Activated CD8-positive, alpha-beta T cell treated with anti-CD3 and anti-CD28 coated beads for 36 hours (primary cell): ENCODE measurements at regions of chr10 and their contacts with region 1.

Region 1: GRCh38 chr10:101569838-101570766 is 18.0 kb downstream of the POLL start:
- DNase-seq: peak; percentile 84
- ATAC-seq: peak; percentile 84
- H3K4me3 Mint-ChIP-seq: peak overlapping the region; percentile 72
- H3K27ac Mint-ChIP-seq: no peak overlapping the region
- H3K4me1 Mint-ChIP-seq: peaks cover 16% of the 10 kb centered on the region
- H3K27me3 Mint-ChIP-seq: peaks cover 39% of the 10 kb centered on the region
- CTCF ChIP-seq: peak; percentile 88

Region 2: GRCh38 chr10:101291331-101292193 is 278.5 kb before region 1 on chr10:
- CTCF ChIA-PET with region 1: interaction called, 4 read pairs
- POLR2A ChIA-PET with region 1: no interaction called
- intact Hi-C with region 1: loop called (anchors 5 kb)
- DNase-seq: peak; percentile 75
- ATAC-seq: peak; percentile 84
- H3K4me3 Mint-ChIP-seq: peak overlapping the region; percentile 70
- H3K27ac Mint-ChIP-seq: no peak overlapping the region
- H3K4me1 Mint-ChIP-seq: peaks cover 8% of the 10 kb centered on the region
- H3K27me3 Mint-ChIP-seq: peaks cover 65% of the 10 kb centered on the region
- CTCF ChIP-seq: peak; percentile 88

Region 3: DNA sequence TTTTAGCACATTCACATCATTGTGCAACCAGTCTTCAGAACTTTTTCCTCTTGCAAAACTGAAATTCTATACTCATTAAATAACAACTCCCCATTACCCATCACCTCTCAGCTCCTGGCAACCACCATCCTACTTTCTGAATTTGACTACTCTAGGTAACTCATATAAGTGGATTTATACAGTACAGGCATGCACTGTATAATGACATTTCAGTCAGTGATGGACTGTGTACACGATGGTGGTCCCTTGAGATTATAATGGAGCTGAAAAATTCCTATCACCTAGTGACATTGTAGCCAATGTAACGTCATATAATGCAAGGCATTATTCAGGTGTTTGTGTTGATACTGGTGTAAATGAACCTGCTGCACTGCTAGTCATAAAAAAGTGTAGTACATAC is 156.1 kb before region 1 on chr10:
- CTCF ChIA-PET with region 1: no interaction called
- POLR2A ChIA-PET with region 1: no interaction called
- intact Hi-C with region 1: no loop called
- DNase-seq: no peak
- ATAC-seq: no peak
- H3K4me3 Mint-ChIP-seq: no peak overlapping the region
- H3K27ac Mint-ChIP-seq: no peak overlapping the region
- H3K4me1 Mint-ChIP-seq: peaks cover 9% of the 10 kb centered on the region
- H3K27me3 Mint-ChIP-seq: no peaks in the 10 kb centered on the region
- CTCF ChIP-seq: no peak

Region 4: DNA sequence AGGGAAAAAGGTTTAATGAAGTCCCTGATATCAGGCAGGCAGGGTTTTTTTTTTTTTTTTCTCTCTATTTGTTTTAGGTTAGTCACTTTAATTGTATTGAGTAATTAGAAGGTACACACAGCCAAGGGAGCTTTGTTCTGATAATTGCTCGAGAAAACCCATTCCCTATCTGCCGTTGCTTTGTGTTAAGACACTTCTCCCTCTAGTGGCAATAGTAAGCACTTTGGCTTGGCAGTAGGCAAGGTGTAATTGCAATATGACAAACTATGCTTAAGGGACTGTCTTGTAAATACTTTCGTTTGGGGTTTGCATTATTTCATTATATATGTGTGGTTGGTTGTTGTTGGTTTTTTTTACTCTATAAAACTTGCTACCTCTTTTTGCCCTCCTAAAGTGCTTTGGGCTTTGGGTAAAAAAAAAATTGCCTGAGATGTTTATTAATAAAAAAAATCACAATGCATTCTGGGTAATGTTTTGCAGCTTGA is 102.8 kb before region 1 on chr10:
- CTCF ChIA-PET with region 1: interaction called, 12 read pairs
- POLR2A ChIA-PET with region 1: no interaction called
- intact Hi-C with region 1: no loop called
- DNase-seq: peak; percentile 29
- ATAC-seq: peak; percentile 88
- H3K4me3 Mint-ChIP-seq: no peak overlapping the region
- H3K27ac Mint-ChIP-seq: no peak overlapping the region
- H3K4me1 Mint-ChIP-seq: peaks cover 8% of the 10 kb centered on the region
- H3K27me3 Mint-ChIP-seq: no peaks in the 10 kb centered on the region
- CTCF ChIP-seq: peak; percentile 75

Region 5: DNA sequence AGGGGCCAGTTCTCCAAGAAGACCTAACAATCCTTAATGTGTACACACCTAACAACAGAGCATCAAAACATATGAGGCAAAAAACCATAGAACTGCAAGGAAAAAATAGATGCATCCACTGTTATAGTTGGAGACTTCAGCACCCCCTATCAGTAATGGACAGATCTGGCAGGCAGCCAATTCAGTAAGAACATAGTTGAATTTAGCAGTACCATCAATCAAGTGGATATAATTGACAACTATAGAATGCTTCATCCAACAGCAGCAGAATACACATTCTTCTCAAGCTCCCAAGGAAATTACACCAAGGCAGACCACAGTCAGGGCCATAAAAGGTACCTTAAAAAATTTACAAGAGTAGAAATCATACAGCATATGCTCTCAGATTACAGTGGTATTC is 24.2 kb before region 1 on chr10:
- CTCF ChIA-PET with region 1: interaction called, 12 read pairs
- POLR2A ChIA-PET with region 1: no interaction called
- intact Hi-C with region 1: no loop called
- DNase-seq: no peak
- ATAC-seq: no peak
- H3K4me3 Mint-ChIP-seq: no peak overlapping the region
- H3K27ac Mint-ChIP-seq: no peak overlapping the region
- H3K4me1 Mint-ChIP-seq: no peaks in the 10 kb centered on the region
- H3K27me3 Mint-ChIP-seq: no peaks in the 10 kb centered on the region
- CTCF ChIP-seq: no peak

Region 6: GRCh38 chr10:101580486-101581399 is 10.6 kb after region 1 on chr10:
- CTCF ChIA-PET with region 1: interaction called, 34 read pairs
- POLR2A ChIA-PET with region 1: interaction called, 4 read pairs
- intact Hi-C with region 1: no loop called
- DNase-seq: no peak
- ATAC-seq: no peak
- H3K4me3 Mint-ChIP-seq: no peak overlapping the region
- H3K27ac Mint-ChIP-seq: no peak overlapping the region
- H3K4me1 Mint-ChIP-seq: no peaks in the 10 kb centered on the region
- H3K27me3 Mint-ChIP-seq: no peaks in the 10 kb centered on the region
- CTCF ChIP-seq: no peak

Region 7: GRCh38 chr10:101682172-101682825 is 112.2 kb after region 1 on chr10:
- CTCF ChIA-PET with region 1: no interaction called
- POLR2A ChIA-PET with region 1: no interaction called
- intact Hi-C with region 1: no loop called
- DNase-seq: no peak
- ATAC-seq: no peak
- H3K4me3 Mint-ChIP-seq: no peak overlapping the region
- H3K27ac Mint-ChIP-seq: peak overlapping the region; percentile 30
- H3K4me1 Mint-ChIP-seq: peaks cover 40% of the 10 kb centered on the region
- H3K27me3 Mint-ChIP-seq: no peaks in the 10 kb centered on the region
- CTCF ChIP-seq: no peak

Region 8: DNA sequence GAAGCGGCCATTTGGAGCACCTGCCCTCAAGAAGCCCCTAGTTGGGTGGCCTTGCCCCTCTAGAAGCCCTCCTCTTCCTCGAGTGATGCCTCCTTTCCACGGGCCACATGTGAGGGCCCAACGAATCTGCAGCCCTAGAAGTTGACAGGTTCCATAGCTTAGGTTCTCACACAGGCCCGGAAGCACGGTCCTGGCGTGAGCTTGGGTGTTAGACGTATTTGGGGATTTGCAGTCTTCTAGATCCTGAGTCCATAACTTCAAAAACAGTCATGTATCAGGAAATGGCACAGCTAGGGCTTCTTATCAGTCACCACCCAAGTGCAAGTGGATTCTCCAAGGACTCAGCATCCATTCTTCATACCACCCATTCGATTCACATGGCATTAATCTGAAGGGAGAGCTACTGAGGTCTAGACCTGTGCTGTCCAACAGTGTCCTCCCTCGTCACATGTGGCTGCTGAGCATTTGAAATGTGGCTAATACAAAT is 125.3 kb after region 1 on chr10:
- CTCF ChIA-PET with region 1: no interaction called
- POLR2A ChIA-PET with region 1: no interaction called
- intact Hi-C with region 1: no loop called
- DNase-seq: no peak
- ATAC-seq: no peak
- H3K4me3 Mint-ChIP-seq: peak overlapping the region; percentile 97
- H3K27ac Mint-ChIP-seq: peak overlapping the region; percentile 83
- H3K4me1 Mint-ChIP-seq: peaks cover 32% of the 10 kb centered on the region
- H3K27me3 Mint-ChIP-seq: no peaks in the 10 kb centered on the region
- CTCF ChIP-seq: no peak

Region 9: GRCh38 chr10:103013416-103013815 is 1443.3 kb after region 1 on chr10:
- CTCF ChIA-PET with region 1: no interaction called
- POLR2A ChIA-PET with region 1: no interaction called
- intact Hi-C with region 1: no loop called
- DNase-seq: no peak
- ATAC-seq: no peak
- H3K4me3 Mint-ChIP-seq: no peak overlapping the region
- H3K27ac Mint-ChIP-seq: no peak overlapping the region
- H3K4me1 Mint-ChIP-seq: no peaks in the 10 kb centered on the region
- H3K27me3 Mint-ChIP-seq: no peaks in the 10 kb centered on the region
- CTCF ChIP-seq: no peak